Activated T-helper 1 cell treated with anti-CD3 and anti-CD28 coated beads, Interleukin-12 subunit alpha, Interleukin-12 subunit beta, Interleukin-2, Interleukin-4 antibody, amounts not matched to agents 30 ng/mL and 10 ng/mL and 1 ng/mL, durations not matched to agents 14 hours and 24 hours and 36 hours (primary cell): ENCODE measurements at regions of chr2 and their contacts with region 1.

Region 1: DNA sequence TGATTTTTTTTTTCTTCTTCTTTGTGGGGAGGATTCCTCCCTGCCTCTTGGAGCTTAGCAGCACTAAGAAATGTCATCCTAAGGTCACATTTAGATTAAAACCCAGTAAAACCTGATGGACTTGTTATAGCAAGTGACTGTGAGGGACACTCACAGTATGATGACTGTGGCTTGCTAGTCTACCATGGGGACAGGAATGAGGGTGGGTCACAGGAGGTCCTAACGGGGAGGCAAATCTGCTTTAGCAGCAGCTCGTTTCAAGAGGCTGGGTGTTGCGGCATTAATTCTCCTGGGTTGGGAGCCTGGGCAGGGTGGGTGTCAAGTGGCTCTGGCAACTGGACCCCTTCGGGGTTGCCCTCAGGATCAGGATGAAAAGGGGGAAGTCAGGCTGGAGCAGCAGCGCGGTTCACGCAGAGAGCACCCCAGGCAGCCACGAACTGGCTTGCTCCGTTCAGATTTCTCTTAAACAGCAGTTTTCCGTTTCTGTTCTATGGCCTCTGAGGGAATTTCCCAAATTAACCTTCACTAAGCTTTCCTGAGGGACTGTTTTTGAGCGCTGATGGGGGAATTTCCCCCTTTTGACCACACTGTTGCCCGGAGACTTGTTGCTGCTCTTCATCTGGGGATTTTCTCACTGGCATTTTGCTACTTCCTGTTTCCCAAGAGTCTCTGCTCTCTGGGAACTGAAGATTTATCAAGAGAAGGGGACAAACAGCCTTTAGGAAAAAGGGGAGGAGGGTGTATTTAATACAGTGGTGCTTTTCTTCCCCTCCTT is 59.8 kb upstream of the PELI1 start:
- DNase-seq: peak; percentile 49
- H3K4me3 Mint-ChIP-seq: peak overlapping the region; percentile 76
- H3K27ac Mint-ChIP-seq: peak overlapping the region; percentile 91
- H3K4me1 Mint-ChIP-seq: peaks cover 84% of the 10 kb centered on the region
- H3K27me3 Mint-ChIP-seq: no peaks in the 10 kb centered on the region

Region 2: GRCh38 chr2:64052468-64053241 is 151.4 kb before region 1 on chr2:
- intact Hi-C with region 1: loop called (anchors 1 kb)
- DNase-seq: no peak
- H3K4me3 Mint-ChIP-seq: no peak overlapping the region
- H3K27ac Mint-ChIP-seq: no peak overlapping the region
- H3K4me1 Mint-ChIP-seq: peaks cover 40% of the 10 kb centered on the region
- H3K27me3 Mint-ChIP-seq: no peaks in the 10 kb centered on the region

Region 3: DNA sequence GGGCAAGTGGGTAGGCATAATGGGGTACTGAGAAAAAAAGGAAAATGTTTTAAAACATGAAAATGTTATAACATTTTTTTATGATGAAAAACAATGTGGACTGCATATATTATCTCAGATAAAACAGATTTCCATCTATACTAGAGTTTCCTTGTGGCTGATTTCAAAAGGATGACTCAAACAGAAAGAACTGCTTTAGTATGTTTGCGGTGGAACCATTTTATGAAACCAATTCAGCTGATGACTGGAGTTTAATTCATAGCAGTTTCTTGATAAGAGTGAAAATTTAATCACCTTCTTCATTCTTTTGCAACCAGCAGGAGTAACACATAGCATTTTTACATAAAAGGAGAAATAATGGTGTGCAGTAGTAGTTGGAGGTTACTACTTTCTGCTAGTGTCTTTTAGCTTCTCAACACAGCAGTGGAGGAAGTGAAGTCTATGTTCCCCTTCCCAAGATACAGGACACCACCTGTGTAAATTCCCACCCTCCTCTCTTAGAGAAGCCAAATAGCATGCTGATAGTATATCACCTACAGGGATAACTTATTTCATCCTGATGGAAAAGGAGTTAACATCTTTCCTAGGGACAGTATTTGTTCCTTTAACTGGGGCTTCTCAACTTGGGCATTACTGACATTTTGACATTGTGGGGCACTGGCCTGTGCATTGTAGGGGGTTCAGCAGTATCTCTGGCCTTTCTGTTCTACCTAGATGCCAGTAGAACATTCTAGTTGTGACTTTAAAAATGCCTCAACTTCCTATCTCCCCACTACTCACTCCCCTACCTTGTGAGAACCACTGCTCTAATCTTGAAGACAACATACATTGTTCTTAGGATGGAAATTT is 89.8 kb before region 1 on chr2:
- intact Hi-C with region 1: loop called (anchors 1 kb)
- DNase-seq: no peak
- H3K4me3 Mint-ChIP-seq: peak overlapping the region; percentile 17
- H3K27ac Mint-ChIP-seq: peak overlapping the region; percentile 59
- H3K4me1 Mint-ChIP-seq: peaks cover 73% of the 10 kb centered on the region
- H3K27me3 Mint-ChIP-seq: no peaks in the 10 kb centered on the region

Region 4: DNA sequence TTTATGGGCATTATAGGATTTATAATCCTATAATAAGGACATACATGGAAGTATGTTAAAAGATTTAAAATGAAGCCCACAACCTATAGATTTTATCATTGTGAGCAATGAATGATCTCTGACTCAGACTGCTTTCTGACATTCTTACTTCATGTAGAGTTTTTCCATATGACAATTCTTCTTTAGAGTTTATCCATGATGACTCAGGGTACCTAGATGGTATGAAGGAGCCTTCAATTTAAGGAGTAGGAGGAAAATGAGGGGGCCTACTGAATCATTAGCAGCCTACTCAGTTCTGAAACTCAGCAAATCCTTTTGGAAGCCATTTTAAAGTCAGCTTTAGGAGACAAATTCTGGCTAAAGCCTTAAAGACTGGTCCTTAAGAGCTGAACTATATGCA is 70.2 kb before region 1 on chr2:
- intact Hi-C with region 1: loop called (anchors 1 kb)
- DNase-seq: no peak
- H3K4me3 Mint-ChIP-seq: peak overlapping the region; percentile 39
- H3K27ac Mint-ChIP-seq: peak overlapping the region; percentile 88
- H3K4me1 Mint-ChIP-seq: peaks cover 90% of the 10 kb centered on the region
- H3K27me3 Mint-ChIP-seq: no peaks in the 10 kb centered on the region

Region 5: GRCh38 chr2:64144057-64145013 is 59.7 kb before region 1 on chr2 and contains the start of gene PELI1:
- intact Hi-C with region 1: loop called (anchors 1 kb)
- DNase-seq: peak; percentile 90
- H3K4me3 Mint-ChIP-seq: peak within 1 kb of the TSS; percentile 98
- H3K27ac Mint-ChIP-seq: peak within 1 kb of the TSS; percentile 97
- H3K4me1 Mint-ChIP-seq: peaks cover 28% of the 10 kb centered on the region
- H3K27me3 Mint-ChIP-seq: peaks cover 3% of the 10 kb centered on the region
- total RNA-seq, gene PELI1: 47.1 and 50.4 TPM in 2 replicates

Region 6: GRCh38 chr2:64165706-64166105 is 38.3 kb before region 1 on chr2:
- intact Hi-C with region 1: loop called (anchors 1 kb)
- DNase-seq: no peak
- H3K4me3 Mint-ChIP-seq: no peak overlapping the region
- H3K27ac Mint-ChIP-seq: no peak overlapping the region
- H3K4me1 Mint-ChIP-seq: no peaks in the 10 kb centered on the region
- H3K27me3 Mint-ChIP-seq: no peaks in the 10 kb centered on the region

Region 7: DNA sequence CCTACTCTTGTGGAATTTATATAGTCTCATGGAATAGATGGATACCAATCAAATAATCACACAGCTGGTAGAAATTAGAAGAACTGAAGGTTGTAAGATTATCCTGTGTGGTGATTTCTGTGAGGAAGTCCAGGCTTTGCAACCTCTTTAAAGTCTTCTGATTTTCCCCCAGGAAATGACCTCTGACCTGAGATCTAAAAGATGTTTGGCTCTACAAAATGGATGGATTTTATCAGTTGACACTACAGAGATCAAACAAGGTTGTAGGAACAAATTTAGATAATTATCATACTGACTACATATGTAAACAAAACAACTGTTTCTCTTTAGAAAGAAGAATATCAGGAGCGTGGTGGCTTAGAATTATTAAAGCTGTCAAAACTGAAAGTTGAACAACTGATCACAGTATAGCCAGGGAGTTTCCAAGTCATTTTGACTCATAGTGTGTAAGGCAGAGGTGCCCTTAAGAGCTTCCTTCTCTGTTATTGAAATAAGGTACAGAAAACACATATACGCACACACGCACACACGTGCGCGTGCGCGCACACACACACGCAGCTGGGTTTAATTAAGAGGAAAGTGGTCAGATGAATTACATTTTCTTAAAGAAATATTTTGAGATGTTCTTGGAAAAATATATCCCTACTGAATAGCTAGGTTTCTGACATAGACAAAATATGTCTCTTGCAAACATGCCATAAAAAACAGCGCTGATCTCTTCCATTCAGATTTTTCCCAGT is 24.3 kb before region 1 on chr2:
- intact Hi-C with region 1: loop called (anchors 2 kb)
- DNase-seq: peak; percentile 12
- H3K4me3 Mint-ChIP-seq: no peak overlapping the region
- H3K27ac Mint-ChIP-seq: peak overlapping the region; percentile 43
- H3K4me1 Mint-ChIP-seq: peaks cover 30% of the 10 kb centered on the region
- H3K27me3 Mint-ChIP-seq: peaks cover 2% of the 10 kb centered on the region